ENCODE measurements at regions of chr3 and their contacts with region 1.

Region 1: GRCh38 chr3:124916837-124917409 is 17.6 kb downstream of the MUC13 start:
- DNase-seq: no peak
- ATAC-seq: peak; percentile 21 to 39 (median 30)
- H3K4me3 ChIP-seq: no peak overlapping the region
- H3K27ac ChIP-seq: no peak overlapping the region
- H3K4me1 ChIP-seq: peaks cover 0 to 11% (median 0%) of the 10 kb centered on the region in 4 donors
- H3K27me3 ChIP-seq: no peaks in the 10 kb centered on the region
- CTCF ChIP-seq: no peak
- POLR2A ChIP-seq: no peak

Region 2: DNA sequence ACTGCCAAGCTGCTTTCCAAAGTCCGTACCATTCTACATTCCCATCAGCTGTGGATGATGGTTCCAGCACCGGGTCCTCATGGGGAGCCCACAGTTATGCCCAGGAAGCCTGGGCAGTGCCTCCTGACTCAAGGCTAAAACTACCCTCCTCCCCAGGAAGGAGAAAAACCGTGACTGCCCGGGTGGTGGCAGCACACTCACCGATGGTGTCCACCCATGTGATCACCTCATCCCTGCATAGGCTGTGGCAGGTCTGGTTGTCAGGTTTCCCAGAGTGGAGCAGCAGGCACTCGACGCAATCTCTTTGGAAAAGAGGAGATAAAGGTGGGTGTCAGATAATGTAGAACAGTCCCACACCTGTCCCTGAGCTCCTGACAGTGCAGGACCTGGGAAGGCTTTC is 148.1 kb before region 1 on chr3:
- intact Hi-C with region 1: loop called in 1 of 2 experiments (anchors 5 kb)
- DNase-seq: peak in 1 of 3 donors; percentile 51
- ATAC-seq: peak; percentile 63 to 73 (median 70)
- H3K4me3 ChIP-seq: no peak overlapping the region
- H3K27ac ChIP-seq: no peak overlapping the region
- H3K4me1 ChIP-seq: peaks cover 0 to 12% (median 0%) of the 10 kb centered on the region in 4 donors
- H3K27me3 ChIP-seq: no peaks in the 10 kb centered on the region
- CTCF ChIP-seq: peak in 3 of 4 donors; percentile 32 to 48 (median 35)
- POLR2A ChIP-seq: no peak

Measured in right lobe of liver (tissue), 6 donors.